GM13976 (cell line): ENCODE measurements at regions of chr6 and their contacts with region 1.

Region 1: DNA sequence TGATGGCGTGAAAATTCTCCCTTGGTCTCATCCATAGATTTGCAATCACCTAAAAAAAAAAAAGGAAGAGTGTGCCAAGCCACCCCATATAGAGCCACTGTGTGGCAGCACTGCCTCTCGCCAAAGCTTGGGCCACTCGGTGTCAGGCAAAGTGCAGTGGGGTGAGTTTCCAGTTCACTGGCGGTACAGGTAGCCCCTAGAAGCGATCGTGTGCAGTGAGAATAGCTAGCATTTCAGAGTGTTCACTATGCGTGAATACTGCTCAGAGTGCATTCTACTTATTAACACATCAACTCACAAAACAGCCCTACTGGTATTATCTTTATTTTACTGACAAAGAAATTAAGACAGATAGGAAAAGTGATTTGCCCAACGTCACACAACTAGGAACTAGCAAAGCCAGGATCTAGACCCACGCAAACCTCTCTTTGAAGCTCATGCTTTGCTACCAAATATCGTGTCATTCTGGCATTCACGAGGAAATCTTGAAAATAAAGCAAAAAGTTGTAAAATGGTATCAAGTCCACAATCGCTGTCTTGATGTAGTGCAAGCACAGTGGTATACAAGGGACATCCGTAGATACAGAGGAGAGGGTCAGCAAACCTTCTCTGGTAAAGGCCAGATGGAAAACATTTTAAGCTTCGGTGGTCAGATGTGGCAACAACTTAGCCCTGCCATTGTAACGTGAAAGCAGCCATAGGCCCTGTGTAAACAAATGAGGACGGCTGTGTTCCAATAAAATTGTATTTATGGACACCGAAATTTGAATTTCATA is 10.4 kb upstream of the GCNT2 start:
- DNase-seq: peak; percentile 71
- CTCF ChIP-seq: peak; percentile 70

Region 2: GRCh38 chr6:9412951-9413559 is 1097.7 kb before region 1 on chr6:
- in situ Hi-C with region 1: no loop called
- DNase-seq: peak; percentile 27
- CTCF ChIP-seq: peak; percentile 53

Region 3: GRCh38 chr6:10695086-10695657 is 184.4 kb after region 1 on chr6:
- in situ Hi-C with region 1: loop called (anchors 10 kb)
- DNase-seq: no peak
- CTCF ChIP-seq: no peak